ENCODE measurements at regions of chr6 and their contacts with region 1.

Region 1: DNA sequence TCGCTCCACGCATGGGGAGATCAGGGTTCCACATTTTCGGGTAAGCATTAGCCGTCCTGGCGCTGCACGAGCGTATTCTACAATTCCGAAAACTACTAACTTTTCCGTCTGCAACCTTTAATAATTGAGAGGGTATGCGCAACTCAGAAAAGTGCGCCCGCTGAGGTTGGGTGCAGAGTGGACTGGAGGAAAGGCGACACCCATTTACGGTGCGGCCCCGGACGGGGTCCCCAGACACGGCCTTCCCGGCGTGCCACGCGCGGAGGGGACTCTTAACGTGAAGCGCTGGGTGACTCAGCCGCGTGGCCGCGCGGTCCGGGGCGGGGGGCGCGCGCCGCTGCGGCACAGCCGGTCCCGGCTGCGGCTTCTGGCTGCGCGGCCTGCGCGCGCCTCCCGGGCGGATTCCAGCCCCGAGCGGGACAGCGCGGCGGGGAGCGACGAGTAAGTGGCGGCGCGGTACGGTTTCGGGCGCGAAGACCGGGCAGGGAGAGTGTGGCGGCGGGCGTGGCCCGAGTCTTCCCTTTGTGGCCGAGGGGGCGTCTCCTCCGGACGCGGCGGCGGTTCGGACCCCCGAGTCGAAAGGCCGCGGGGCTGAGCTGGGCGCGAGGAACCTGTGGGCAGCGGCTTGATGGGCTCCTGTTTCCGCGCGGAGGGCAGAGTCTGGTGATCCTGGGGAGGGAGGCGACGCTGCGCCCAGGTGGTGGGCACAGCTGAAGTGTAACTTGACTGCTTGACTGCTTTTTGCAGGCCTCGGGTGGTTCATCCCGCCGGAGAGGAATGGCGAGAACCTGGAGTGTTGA is at the starts of genes KCTD20 and PXT1:
- DNase-seq: peak; percentile 84
- H3K4me3 Mint-ChIP-seq: peak within 1 kb of the TSS; percentile 93
- H3K27ac Mint-ChIP-seq: peak within 1 kb of the TSS; percentile 97
- H3K4me1 Mint-ChIP-seq: peaks cover 30% of the 10 kb centered on the region
- H3K27me3 Mint-ChIP-seq: no peaks in the 10 kb centered on the region
- total RNA-seq, gene KCTD20: 51.1 and 54.8 TPM in 2 replicates
- total RNA-seq, gene PXT1: 0.14 and 0.27 TPM in 2 replicates

Region 2: GRCh38 chr6:36386495-36387439 is 56.1 kb before region 1 on chr6:
- intact Hi-C with region 1: no loop called
- DNase-seq: no peak
- H3K4me3 Mint-ChIP-seq: peak overlapping the region; percentile 90
- H3K27ac Mint-ChIP-seq: peak overlapping the region; percentile 61
- H3K4me1 Mint-ChIP-seq: peaks cover 37% of the 10 kb centered on the region
- H3K27me3 Mint-ChIP-seq: peaks cover 53% of the 10 kb centered on the region

Region 3: DNA sequence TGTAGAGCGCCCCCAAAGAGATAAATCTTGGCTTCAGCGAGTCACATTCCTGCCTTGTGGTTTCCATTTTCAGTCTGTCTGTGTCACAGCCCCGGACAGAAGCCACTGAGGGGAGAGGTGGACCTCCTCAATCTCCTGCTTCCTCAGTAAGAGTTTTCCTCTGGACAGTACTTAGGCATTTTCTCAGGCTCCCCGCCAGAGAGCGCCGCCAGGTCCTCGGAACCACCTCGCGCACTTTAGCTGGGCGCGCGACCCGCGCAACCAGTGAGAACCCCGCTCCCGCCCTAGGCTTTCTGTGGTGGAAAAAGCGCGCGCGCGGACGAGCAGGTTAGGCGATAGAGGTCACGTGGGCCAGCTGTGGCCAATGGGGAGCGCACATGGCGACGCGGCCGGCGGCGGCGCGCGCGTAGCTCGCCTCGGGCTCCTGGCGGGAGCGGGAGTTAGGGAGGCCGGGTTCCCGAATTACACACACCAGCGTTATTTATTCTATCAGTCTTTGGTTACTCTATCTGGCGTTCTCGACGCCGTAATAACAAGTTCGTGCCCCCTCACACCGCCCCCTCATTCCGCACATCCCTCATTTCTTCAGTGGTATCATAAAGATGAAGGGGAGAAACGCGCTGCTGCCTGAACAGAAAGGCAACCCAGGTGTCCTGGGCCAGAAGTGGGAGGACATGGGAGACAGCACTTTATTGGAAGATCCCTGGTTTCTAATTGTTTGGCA is 19.6 kb before region 1 on chr6:
- intact Hi-C with region 1: loop called (anchors 1 kb)
- DNase-seq: peak; percentile 97
- H3K4me3 Mint-ChIP-seq: peak overlapping the region; percentile 88
- H3K27ac Mint-ChIP-seq: peak overlapping the region; percentile 85
- H3K4me1 Mint-ChIP-seq: peaks cover 15% of the 10 kb centered on the region
- H3K27me3 Mint-ChIP-seq: peaks cover 7% of the 10 kb centered on the region

Region 4: DNA sequence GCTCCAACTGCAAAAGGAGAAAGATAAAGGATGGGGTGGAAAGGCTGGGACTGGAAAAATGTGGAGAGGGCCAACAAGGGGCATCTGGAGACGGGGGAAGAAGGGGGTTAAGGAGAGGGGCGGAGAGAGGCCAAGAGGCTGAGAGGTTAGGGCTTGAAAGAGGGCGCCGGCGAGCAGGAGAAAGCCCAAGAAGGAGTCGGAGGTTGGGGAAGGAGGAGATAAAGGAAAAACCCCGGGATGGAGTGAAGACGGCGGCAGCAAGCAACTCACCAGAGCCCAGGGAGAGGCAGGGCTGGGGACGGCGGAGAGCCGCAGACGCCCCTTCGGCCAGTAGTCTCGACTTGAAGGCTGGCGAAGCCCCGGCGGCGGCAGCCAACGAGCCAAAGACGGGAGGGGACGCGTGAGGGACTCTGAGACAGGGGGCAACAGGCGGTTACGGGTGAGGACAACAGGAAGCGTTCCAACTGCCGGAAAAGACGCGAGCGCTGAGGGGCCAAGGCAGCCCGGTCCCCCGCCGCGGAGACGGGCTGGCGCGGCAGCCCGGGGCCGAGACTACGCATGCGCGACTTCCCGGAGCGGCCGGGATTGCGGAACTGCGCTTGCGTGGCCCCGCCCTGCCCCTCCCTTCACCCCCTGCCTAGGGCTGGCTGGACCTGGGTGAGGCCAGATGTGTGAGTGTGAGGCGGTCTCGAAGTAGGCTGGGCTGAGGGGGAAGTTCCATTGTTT is 104.2 kb after region 1 on chr6 and contains the start of gene STK38:
- intact Hi-C with region 1: loop called (anchors 2 kb)
- DNase-seq: peak; percentile 85
- H3K4me3 Mint-ChIP-seq: peak within 1 kb of the TSS; percentile 98
- H3K27ac Mint-ChIP-seq: peak within 1 kb of the TSS; percentile 95
- H3K4me1 Mint-ChIP-seq: peaks cover 33% of the 10 kb centered on the region
- H3K27me3 Mint-ChIP-seq: no peaks in the 10 kb centered on the region
- total RNA-seq, gene STK38: 22.9 and 25.0 TPM in 2 replicates

Region 5: GRCh38 chr6:36962874-36963273 is 520.0 kb after region 1 on chr6:
- intact Hi-C with region 1: no loop called
- DNase-seq: peak; percentile 72
- H3K4me3 Mint-ChIP-seq: no peak overlapping the region
- H3K27ac Mint-ChIP-seq: no peak overlapping the region
- H3K4me1 Mint-ChIP-seq: peaks cover 30% of the 10 kb centered on the region
- H3K27me3 Mint-ChIP-seq: no peaks in the 10 kb centered on the region

Measured in activated T-helper 2 cell treated with anti-CD3 and anti-CD28 coated beads, Interferon-gamma antibody, Interleukin-2, Interleukin-4, amounts not matched to agents 10 μg/mL and 5 μg/mL and 100 μg/mL, durations not matched to agents 14 hours and 24 hours and 36 hours (primary cell).